ENCODE measurements at regions of chr13 and their contacts with region 1.

Region 1: GRCh38 chr13:97344265-97345175 is 89.4 kb upstream of the RAP2A start:
- DNase-seq: peak in 1 of 2 experiments; percentile 57
- ATAC-seq: peak; percentile 84 to 89; a peak in 4 of 6 replicates
- H3K4me3 ChIP-seq: no peak overlapping the region
- H3K27ac ChIP-seq: peak overlapping the region; percentile 59 to 72
- H3K4me1 ChIP-seq: peaks cover 42% of the 10 kb centered on the region
- CTCF ChIP-seq: peak; percentile 75
- EP300 ChIP-seq: no peak
- POLR2A ChIP-seq: no peak
- RAD21 ChIP-seq: peak; percentile 83 to 89

Region 2: GRCh38 chr13:97221989-97222700 is 122.4 kb before region 1 on chr13 and contains the start of gene MBNL2:
- CTCF ChIA-PET with region 1: interaction called, 22 read pairs
- POLR2A ChIA-PET with region 1: no interaction called
- DNase-seq: peak; percentile 67 to 87
- ATAC-seq: peak; percentile 99 to 100
- H3K4me3 ChIP-seq: peak within 1 kb of the TSS; percentile 65
- H3K27ac ChIP-seq: peak within 1 kb of the TSS; percentile 73 to 84
- H3K4me1 ChIP-seq: peaks cover 34% of the 10 kb centered on the region
- CTCF ChIP-seq: no peak
- EP300 ChIP-seq: no peak
- POLR2A ChIP-seq: 0 out of 2 replicates have a peak, but pooled peaks have one; percentile 16
- RAD21 ChIP-seq: no peak
- polyA plus RNA-seq, gene MBNL2: 20.6 and 25.9 TPM in 2 replicates

Region 3: DNA sequence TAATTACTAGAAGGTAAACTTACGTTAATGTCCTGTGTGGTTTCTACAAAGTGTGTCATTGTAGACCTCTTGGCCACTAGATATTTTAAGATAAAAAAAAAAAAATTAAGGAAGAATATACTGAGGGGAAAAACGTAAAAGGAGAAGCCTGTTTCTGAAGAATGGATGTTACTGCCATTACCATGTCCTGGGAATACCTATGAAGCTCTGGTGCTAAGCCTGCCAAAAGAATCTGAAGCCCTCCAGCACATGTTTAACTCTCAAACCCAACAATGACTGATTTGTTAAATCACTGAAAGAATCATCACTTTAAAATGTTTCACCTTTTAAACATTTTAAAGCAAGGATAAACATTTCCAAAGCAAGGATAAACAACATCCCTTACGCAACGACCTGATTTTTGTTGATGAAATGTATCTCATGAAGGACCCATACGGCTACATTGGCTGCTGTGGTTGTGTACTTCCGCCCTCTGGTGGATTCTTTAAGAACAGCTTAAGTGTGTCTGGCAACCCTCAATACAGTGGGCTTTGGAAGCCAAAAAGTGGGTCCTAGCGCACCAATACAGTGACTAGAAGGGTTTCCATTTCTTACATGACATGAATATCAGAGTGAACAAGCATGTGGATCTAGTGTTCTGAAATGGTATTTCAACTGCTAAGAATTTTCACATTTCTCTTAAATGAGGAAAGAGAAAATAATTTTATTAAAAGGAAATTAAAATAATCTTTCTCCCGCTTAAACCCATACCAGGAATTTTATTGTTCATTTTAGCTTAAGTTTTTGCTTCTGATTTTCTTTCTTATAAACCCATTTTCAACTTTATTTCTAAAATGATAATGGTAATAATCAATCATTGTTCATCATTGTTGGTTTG is 14.9 kb after region 1 on chr13:
- CTCF ChIA-PET with region 1: interaction called, 10 read pairs
- POLR2A ChIA-PET with region 1: no interaction called
- DNase-seq: peak; percentile 40 to 74
- ATAC-seq: peak; percentile 89 to 96
- H3K4me3 ChIP-seq: no peak overlapping the region
- H3K27ac ChIP-seq: peak overlapping the region in 1 of 2 experiments; percentile 12; a peak in 2 of 6 replicates
- H3K4me1 ChIP-seq: peaks cover 16% of the 10 kb centered on the region; the same call in 1 of the 3 replicates
- CTCF ChIP-seq: peak; percentile 76
- EP300 ChIP-seq: no peak
- POLR2A ChIP-seq: no peak
- RAD21 ChIP-seq: peak; percentile 85 to 90

Measured in A549 (cell line).